ENCODE measurements at regions of chr12 and their contacts with region 1.

Region 1: GRCh38 chr12:108664338-108665258 is 30.9 kb upstream of the SELPLG start:
- DNase-seq: peak; percentile 41 to 96
- H3K4me3 ChIP-seq: peak overlapping the region in 1 of 2 donors; percentile 40
- H3K27ac ChIP-seq: peak overlapping the region; percentile 74 to 91
- H3K4me1 ChIP-seq: peaks cover 11 to 55% of the 10 kb centered on the region in 2 donors
- H3K27me3 ChIP-seq: no peaks in the 10 kb centered on the region
- CTCF ChIP-seq: peak; percentile 93 to 95 (median 95)

Region 2: DNA sequence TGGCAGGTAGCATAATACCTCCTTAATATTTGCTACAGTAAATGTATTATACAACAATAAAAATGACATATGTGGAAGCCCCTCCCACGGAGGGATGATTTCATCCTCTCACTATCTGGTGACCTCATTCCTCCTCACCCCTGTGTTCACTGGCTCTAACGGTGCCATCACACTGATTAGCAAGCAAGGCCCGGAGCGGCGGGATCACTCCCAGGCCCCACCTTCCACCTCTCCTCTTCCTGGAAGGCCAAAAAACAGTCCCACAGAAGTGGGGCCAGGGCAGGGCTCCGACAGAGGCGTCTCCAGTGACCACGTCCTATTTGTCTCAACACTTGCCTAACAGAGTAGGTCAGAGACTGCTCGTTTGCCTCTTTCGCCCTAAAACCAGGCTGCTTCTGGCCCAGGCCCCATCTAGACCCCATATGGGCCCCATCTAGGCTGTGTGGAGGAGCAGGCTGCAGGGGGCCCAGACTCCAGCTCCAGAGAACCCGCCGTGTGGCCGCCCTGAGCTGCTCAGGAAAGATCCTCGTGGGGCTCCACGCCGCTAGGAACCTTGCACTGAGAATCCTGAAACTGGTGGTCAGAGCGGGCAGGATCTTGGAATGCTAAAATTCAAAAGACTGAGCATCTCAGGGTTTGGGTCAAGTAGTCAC is 34.6 kb before region 1 on chr12:
- intact Hi-C with region 1: no loop called
- DNase-seq: no peak
- H3K4me3 ChIP-seq: no peak overlapping the region
- H3K27ac ChIP-seq: peak overlapping the region; percentile 36 to 53
- H3K4me1 ChIP-seq: no peaks in the 10 kb centered on the region
- H3K27me3 ChIP-seq: no peaks in the 10 kb centered on the region
- CTCF ChIP-seq: no peak

Region 3: GRCh38 chr12:108640802-108641445 is 23.7 kb before region 1 on chr12:
- intact Hi-C with region 1: loop called (anchors 1 kb)
- DNase-seq: no peak
- H3K4me3 ChIP-seq: no peak overlapping the region
- H3K27ac ChIP-seq: no peak overlapping the region
- H3K4me1 ChIP-seq: peaks cover 13 to 26% of the 10 kb centered on the region in 2 donors
- H3K27me3 ChIP-seq: no peaks in the 10 kb centered on the region
- CTCF ChIP-seq: no peak

Region 4: DNA sequence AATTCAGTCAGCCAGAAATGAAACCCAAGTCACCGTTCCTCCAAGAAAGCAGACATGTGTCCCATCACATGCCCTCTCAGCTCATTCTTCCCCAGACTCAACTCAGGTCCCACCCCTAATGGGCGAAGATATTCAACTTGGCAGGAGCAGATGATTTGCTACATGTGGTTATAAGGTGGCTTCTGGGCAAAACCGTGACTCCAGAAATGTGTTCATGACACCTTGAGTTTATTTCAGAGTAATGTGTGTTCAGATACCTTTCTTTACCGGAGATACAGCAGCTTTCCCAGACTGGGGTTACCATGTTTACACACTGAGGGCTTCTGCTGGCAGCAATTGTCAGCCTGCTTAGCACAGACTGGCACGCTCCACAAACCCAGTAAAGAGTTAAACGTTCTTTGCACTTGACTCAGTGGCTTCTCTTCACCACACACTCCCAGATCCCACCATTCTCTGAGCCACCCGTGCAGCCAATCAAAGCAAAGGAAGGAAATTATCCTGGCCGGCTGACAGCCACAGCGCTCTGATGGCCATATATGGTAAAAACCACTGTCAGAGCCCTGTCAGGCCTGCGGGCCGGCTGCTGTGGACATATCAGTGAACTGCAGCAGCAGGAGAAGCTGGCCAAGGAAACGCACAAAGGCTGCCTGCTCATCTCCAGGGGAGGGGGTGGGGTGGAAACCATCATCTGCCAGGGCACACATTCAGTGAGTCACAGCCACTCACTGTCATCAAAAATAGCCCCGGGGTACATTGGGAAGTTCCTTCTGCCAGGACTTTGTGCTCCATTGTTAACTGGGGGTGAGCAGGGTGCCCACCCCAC is 26.8 kb after region 1 on chr12:
- intact Hi-C with region 1: loop called (anchors 1 kb)
- DNase-seq: peak; percentile 93 to 98
- H3K4me3 ChIP-seq: peak overlapping the region; percentile 38 to 50
- H3K27ac ChIP-seq: peak overlapping the region; percentile 95 to 97
- H3K4me1 ChIP-seq: peaks cover 23 to 66% of the 10 kb centered on the region in 2 donors
- H3K27me3 ChIP-seq: no peaks in the 10 kb centered on the region
- CTCF ChIP-seq: peak; percentile 26 to 56 (median 42)

Region 5: DNA sequence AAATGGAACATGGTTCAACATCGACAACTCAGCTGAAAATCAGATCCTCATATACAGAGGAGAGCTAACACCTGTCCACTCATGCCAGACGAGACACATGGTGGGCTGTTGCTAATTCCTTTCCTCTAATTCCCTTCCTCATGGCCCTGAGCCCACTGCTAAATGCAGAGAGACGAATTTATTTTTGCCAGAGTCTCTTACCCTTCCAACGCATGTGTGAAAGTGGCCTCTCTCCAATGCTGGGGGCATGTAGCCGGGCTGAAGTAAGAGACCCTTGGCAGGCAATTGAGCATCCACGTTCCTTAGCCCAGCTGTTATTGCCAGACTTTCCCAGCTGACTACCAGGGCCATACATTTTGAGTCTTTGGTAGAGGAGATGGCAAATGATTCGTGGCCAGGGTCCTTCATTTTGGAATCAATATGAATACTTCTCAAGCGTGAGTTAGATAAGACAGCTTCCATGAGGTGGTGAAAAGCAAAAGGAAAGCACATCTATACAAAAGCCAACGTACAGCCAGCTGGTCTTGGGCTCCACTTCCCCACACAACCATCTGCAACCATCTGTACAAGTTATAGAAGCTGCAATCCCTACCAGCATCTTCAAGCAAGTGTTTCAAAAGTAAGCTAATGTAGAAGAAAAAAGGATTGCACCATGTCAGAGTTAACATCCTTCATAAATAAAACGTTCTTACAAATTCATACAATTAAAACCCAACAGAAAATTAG is 38.2 kb after region 1 on chr12:
- intact Hi-C with region 1: no loop called
- DNase-seq: no peak
- H3K4me3 ChIP-seq: peak overlapping the region; percentile 3 to 41
- H3K27ac ChIP-seq: peak overlapping the region; percentile 83 to 85
- H3K4me1 ChIP-seq: peaks cover 4 to 38% of the 10 kb centered on the region in 2 donors
- H3K27me3 ChIP-seq: no peaks in the 10 kb centered on the region
- CTCF ChIP-seq: no peak

Region 6: DNA sequence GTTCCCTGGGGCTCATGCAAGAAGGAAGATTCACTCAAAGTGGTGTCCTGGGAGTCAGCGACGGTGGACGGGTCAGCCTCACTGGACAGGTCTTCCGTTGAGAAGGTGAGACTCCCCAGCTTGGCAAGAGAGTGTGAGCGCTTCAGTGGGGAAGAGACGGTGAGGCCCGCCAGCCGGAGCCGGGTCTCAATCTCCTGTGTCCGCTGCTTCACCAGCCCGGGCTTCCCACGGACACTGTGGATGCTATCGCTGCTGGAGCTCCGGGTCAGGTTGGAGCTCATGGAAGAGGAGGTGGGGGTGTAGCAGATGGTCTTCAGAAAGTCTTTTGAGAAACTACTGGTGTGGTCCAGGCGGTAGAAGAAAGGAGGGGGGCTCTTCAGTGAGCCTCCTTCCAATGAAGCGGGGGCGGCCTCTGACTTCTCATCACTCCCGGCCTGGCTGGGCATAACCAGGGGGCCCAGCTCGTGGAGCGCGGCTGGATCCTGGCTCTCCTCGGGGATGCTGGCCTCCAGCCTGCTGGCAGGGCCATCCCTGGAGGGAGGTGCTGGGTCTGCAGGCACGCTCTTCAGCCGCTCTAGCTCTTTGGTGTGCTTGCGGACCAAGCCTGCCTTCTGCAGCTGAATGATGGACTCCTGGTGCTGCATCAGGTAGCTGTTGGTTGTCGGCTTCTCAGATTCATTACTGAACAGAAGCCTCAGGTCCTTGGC is 123.6 kb after region 1 on chr12:
- intact Hi-C with region 1: loop called (anchors 5 kb)
- DNase-seq: no peak
- H3K4me3 ChIP-seq: no peak overlapping the region
- H3K27ac ChIP-seq: peak overlapping the region; percentile 8 to 52
- H3K4me1 ChIP-seq: peaks cover 6 to 26% of the 10 kb centered on the region in 2 donors
- H3K27me3 ChIP-seq: no peaks in the 10 kb centered on the region
- CTCF ChIP-seq: no peak

Region 7: GRCh38 chr12:108950991-108951739 is 286.6 kb after region 1 on chr12:
- intact Hi-C with region 1: loop called (anchors 2 kb)
- DNase-seq: peak in 1 of 2 donors; percentile 85
- H3K4me3 ChIP-seq: peak overlapping the region in 1 of 2 donors; percentile 34
- H3K27ac ChIP-seq: no peak overlapping the region
- H3K4me1 ChIP-seq: no peaks in the 10 kb centered on the region
- H3K27me3 ChIP-seq: no peaks in the 10 kb centered on the region
- CTCF ChIP-seq: peak; percentile 76 to 87 (median 87)